Upper lobe of right lung (tissue), 1 donor: ENCODE measurements at regions of chr10 and their contacts with region 1.

Region 1: GRCh38 chr10:102729029-102730026 is 14.4 kb upstream of the WBP1L start:
- DNase-seq: peak; percentile 93
- ATAC-seq: peak; percentile 96
- H3K4me3 ChIP-seq: no peak overlapping the region
- H3K27ac ChIP-seq: no peak overlapping the region
- H3K4me1 ChIP-seq: peaks cover 10% of the 10 kb centered on the region
- H3K27me3 ChIP-seq: no peaks in the 10 kb centered on the region
- CTCF ChIP-seq: peak; percentile 91

Region 2: DNA sequence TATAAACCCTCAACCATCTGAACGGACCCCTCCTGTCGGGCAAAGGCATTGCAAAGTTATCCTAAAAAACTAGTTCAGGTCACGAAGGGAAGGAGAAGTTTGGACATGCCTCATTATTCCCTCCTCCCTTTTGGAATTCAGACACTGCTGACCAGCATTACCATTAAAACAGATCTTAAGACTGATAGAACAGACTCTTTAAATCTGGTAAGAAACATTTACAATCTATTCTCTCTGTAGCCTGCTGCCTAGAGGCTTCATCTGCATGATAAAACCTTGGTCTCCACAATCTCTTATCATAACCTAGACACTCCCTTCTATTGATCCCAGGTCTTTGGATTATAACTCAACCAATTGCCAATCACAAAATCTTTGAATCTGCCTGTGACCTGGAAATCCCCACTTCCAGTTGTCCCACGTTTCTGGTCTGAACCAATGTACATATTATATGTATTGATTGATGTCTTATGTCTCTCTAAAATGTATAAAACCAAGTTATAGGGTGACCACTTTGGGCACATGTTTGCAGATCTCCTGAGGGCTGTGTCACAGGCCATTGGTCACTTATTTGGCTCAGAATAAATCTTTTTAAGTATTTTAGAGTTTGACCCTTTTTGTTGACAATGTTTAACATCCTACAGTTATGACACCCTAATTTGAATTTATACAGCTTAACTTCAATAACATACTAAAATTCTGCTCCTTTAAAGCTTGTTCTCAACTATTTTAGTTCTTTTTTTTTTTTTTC is 165.3 kb after region 1 on chr10:
- intact Hi-C with region 1: loop called (anchors 5 kb)
- DNase-seq: no peak
- ATAC-seq: no peak
- H3K4me3 ChIP-seq: no peak overlapping the region
- H3K27ac ChIP-seq: no peak overlapping the region
- H3K4me1 ChIP-seq: no peaks in the 10 kb centered on the region
- H3K27me3 ChIP-seq: no peaks in the 10 kb centered on the region
- CTCF ChIP-seq: no peak